CD4-positive, alpha-beta memory T cell (primary cell): ENCODE measurements at regions of chr6 and their contacts with region 1.

Region 1: GRCh38 chr6:11381801-11382513 is 149.5 kb upstream of the NEDD9 start:
- DNase-seq: peak; percentile 81 to 92 (median 88)
- H3K4me3 ChIP-seq: peak overlapping the region; percentile 66 to 82
- H3K4me3 Mint-ChIP-seq: peak overlapping the region; percentile 87 to 96 (median 94)
- H3K27ac ChIP-seq: peak overlapping the region; percentile 73
- H3K27ac Mint-ChIP-seq: peak overlapping the region; percentile 91 to 98 (median 96)
- H3K4me1 ChIP-seq: peaks cover 49% of the 10 kb centered on the region
- H3K4me1 Mint-ChIP-seq: peaks cover 49 to 75% (median 58%) of the 10 kb centered on the region in 4 donors
- H3K27me3 ChIP-seq: no peaks in the 10 kb centered on the region
- H3K27me3 Mint-ChIP-seq: no peaks in the 10 kb centered on the region

Region 2: GRCh38 chr6:11172501-11173332 is 209.2 kb before region 1 on chr6:
- CTCF ChIA-PET with region 1: interaction called, 26 read pairs
- POLR2A ChIA-PET with region 1: no interaction called
- intact Hi-C with region 1: loop called (anchors 1 kb)
- DNase-seq: peak; percentile 56 to 72 (median 65)
- H3K4me3 ChIP-seq: peak overlapping the region in 1 of 2 donors; percentile 9
- H3K4me3 Mint-ChIP-seq: peak overlapping the region; percentile 16 to 78 (median 64)
- H3K27ac ChIP-seq: no peak overlapping the region
- H3K27ac Mint-ChIP-seq: peak overlapping the region in 4 of 7 donors; percentile 3 to 65 (median 30)
- H3K4me1 ChIP-seq: peaks cover 12% of the 10 kb centered on the region
- H3K4me1 Mint-ChIP-seq: peaks cover 9 to 20% (median 10%) of the 10 kb centered on the region in 4 donors
- H3K27me3 ChIP-seq: no peaks in the 10 kb centered on the region
- H3K27me3 Mint-ChIP-seq: no peaks in the 10 kb centered on the region

Region 3: GRCh38 chr6:11232193-11232769 is 149.7 kb before region 1 on chr6 and contains the start of gene NEDD9:
- CTCF ChIA-PET with region 1: interaction called, 8 read pairs
- POLR2A ChIA-PET with region 1: interaction called, 42 read pairs
- intact Hi-C with region 1: loop called (anchors 1 kb)
- DNase-seq: peak; percentile 90 to 99 (median 94)
- H3K4me3 ChIP-seq: peak within 1 kb of the TSS; percentile 55 to 80
- H3K4me3 Mint-ChIP-seq: peak within 1 kb of the TSS; percentile 91 to 98 (median 94)
- H3K27ac ChIP-seq: peak within 1 kb of the TSS; percentile 89
- H3K27ac Mint-ChIP-seq: peak within 1 kb of the TSS; percentile 96 to 99 (median 98)
- H3K4me1 ChIP-seq: peaks cover 61% of the 10 kb centered on the region
- H3K4me1 Mint-ChIP-seq: peaks cover 46 to 78% (median 54%) of the 10 kb centered on the region in 4 donors
- H3K27me3 ChIP-seq: no peaks in the 10 kb centered on the region
- H3K27me3 Mint-ChIP-seq: no peaks in the 10 kb centered on the region
- total RNA-seq, gene NEDD9: 42.7 to 47.4 TPM

Region 4: DNA sequence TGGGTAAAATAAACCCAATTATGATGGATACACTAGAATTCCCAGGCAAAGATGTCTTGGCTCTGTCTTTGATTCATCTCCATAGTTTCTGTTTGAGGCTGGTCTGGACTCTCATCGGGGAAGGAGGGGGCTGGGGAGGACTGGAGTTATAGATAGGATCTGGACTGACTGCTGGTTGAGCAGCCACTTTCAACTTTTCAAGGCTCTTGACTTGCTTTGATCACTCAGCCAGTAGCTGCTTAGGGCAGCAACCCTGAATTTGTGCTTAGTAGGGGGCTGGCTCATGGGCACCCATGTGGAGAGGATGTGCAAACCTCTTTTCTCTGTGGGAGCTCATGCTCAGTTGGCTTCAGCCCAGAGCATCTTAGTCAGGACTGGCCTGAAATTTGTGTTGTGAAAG is 35.4 kb before region 1 on chr6:
- CTCF ChIA-PET with region 1: no interaction called
- POLR2A ChIA-PET with region 1: interaction called, 12 read pairs
- intact Hi-C with region 1: no loop called
- DNase-seq: no peak
- H3K4me3 ChIP-seq: no peak overlapping the region
- H3K4me3 Mint-ChIP-seq: no peak overlapping the region
- H3K27ac ChIP-seq: no peak overlapping the region
- H3K27ac Mint-ChIP-seq: peak overlapping the region in 2 of 7 donors; percentile 2 to 24
- H3K4me1 ChIP-seq: peaks cover 47% of the 10 kb centered on the region
- H3K4me1 Mint-ChIP-seq: peaks cover 65 to 94% (median 79%) of the 10 kb centered on the region in 4 donors
- H3K27me3 ChIP-seq: no peaks in the 10 kb centered on the region
- H3K27me3 Mint-ChIP-seq: no peaks in the 10 kb centered on the region

Region 5: DNA sequence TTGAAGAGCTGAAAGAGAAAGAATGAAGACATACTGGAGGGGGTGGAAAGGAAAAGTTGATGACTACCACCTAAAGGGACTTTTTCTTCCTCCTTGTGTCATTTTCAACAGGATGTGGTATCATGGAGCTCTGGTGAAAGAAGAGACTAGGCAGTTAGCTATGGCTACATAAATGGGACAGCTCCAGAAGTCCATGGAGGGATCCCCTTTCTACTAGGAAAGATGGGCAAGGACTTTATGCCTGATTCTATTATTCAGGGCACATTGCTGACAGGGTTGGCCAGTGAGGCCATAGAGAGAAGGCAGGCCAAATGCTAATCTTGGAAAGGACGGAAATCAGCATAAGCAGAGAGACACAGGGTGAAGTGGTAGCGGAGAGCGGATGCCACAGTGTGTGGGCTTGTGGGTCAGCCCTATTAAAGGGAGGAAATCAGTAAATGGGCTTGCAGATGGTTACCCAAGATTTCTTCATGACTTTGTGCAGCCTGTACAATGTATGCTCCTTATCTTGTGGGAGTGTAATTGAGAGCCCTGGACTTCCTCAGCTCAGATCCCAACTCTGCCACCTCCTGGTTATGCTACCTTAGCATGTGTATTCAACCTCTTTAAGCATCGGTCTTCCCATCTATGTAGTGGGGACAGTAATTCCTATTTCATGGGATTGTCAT is 78.2 kb after region 1 on chr6:
- CTCF ChIA-PET with region 1: interaction called, 5 read pairs
- POLR2A ChIA-PET with region 1: no interaction called
- intact Hi-C with region 1: loop called (anchors 2 kb)
- DNase-seq: peak in 3 of 5 donors; percentile 5 to 10 (median 9)
- H3K4me3 ChIP-seq: no peak overlapping the region
- H3K4me3 Mint-ChIP-seq: peak overlapping the region in 6 of 8 donors; percentile 1 to 57 (median 31)
- H3K27ac ChIP-seq: no peak overlapping the region
- H3K27ac Mint-ChIP-seq: peak overlapping the region in 4 of 7 donors; percentile 2 to 53 (median 12)
- H3K4me1 ChIP-seq: peaks cover 19% of the 10 kb centered on the region
- H3K4me1 Mint-ChIP-seq: peaks cover 16 to 25% (median 22%) of the 10 kb centered on the region in 4 donors
- H3K27me3 ChIP-seq: no peaks in the 10 kb centered on the region
- H3K27me3 Mint-ChIP-seq: no peaks in the 10 kb centered on the region